ENCODE measurements at regions of chr20 and their contacts with region 1.

Region 1: GRCh38 chr20:58169450-58169849 is 59.0 kb downstream of the ANKRD60 start:
- DNase-seq: peak; percentile 7
- H3K4me3 ChIP-seq: no peak overlapping the region
- CTCF ChIP-seq: no peak

Region 2: DNA sequence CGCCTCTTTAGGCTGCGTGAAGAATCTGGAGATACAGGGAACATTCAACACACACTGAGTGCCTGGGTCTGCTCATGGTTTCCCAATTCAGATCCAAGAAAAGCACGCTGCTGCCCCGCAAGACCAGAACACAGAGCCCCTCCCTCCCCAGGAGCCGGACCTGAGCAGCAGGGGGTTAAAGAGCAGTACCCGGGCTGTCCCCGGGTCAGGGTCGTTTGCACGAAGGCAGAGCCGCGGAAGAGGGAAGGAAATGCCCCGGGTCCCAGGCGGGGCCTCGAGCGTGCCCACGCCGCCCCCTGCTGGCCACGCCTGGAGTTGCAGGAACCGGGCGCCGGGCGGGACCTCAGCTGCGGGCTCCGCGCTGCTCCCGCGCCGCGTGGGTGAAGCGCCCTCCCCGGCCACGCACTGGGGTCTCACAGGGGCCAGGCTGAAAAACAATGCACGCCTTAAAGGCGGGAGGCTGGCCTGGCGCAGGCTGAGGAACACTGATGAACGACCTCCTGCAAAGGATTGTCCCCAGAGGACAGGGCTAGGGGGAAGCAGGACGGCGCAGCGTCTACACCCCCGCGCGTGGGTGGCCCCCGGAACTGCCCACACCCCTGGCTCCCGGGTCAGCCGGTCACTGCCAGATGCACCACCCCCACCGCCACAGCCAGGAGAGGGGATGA is 10.1 kb after region 1 on chr20:
- CTCF ChIA-PET with region 1: interaction called, 13 read pairs
- POLR2A ChIA-PET with region 1: no interaction called
- DNase-seq: no peak
- H3K4me3 ChIP-seq: peak overlapping the region; percentile 43
- CTCF ChIP-seq: peak; percentile 92

Measured in AG04449 (cell line).